Activated CD4-positive, alpha-beta T cell treated with anti-CD3 and anti-CD28 coated beads, Interleukin-2, amount 10 ng/mL, durations not matched to agents 7 days and 5 days (primary cell): ENCODE measurements at regions of chr5 and their contacts with region 1.

Region 1: GRCh38 chr5:143201589-143201988 is 201.9 kb downstream of the NR3C1 start:
- DNase-seq: no peak
- H3K4me3 Mint-ChIP-seq: no peak overlapping the region
- H3K27ac Mint-ChIP-seq: no peak overlapping the region
- H3K4me1 Mint-ChIP-seq: peaks cover 11% of the 10 kb centered on the region
- H3K27me3 Mint-ChIP-seq: no peaks in the 10 kb centered on the region

Region 2: GRCh38 chr5:143229896-143230675 is 28.5 kb after region 1 on chr5:
- CTCF ChIA-PET with region 1: no interaction called
- POLR2A ChIA-PET with region 1: no interaction called
- DNase-seq: peak; percentile 69
- H3K4me3 Mint-ChIP-seq: peak overlapping the region; percentile 44
- H3K27ac Mint-ChIP-seq: peak overlapping the region; percentile 91
- H3K4me1 Mint-ChIP-seq: peaks cover 30% of the 10 kb centered on the region
- H3K27me3 Mint-ChIP-seq: no peaks in the 10 kb centered on the region

Region 3: DNA sequence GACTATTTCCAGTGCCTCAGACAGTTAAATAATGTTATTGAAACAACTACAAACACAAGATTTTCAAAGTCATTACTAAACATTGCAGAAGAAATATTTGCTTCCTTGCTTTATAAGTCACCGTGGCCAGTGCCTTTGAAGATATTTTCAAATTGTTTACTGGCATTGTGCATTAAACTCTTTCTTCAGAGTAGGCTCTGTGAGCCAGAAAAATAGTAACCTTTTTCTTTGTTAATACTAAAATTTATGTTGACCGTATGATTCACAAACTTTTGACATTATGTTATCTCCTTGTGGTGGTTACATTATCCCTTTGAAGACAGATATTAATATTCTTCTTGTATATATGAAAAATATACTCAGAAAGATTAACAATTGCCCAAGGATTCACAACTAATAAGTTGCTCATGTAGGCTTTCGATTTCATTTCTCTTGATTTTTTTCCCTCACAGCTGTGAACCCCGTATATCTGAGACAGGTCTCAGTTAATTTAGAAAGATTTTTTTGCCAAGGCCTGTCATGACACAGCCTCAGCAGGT is 61.8 kb after region 1 on chr5:
- CTCF ChIA-PET with region 1: no interaction called
- POLR2A ChIA-PET with region 1: interaction called, 14 read pairs
- DNase-seq: no peak
- H3K4me3 Mint-ChIP-seq: no peak overlapping the region
- H3K27ac Mint-ChIP-seq: no peak overlapping the region
- H3K4me1 Mint-ChIP-seq: peaks cover 2% of the 10 kb centered on the region
- H3K27me3 Mint-ChIP-seq: no peaks in the 10 kb centered on the region

Region 4: GRCh38 chr5:143495821-143496275 is 294.3 kb after region 1 on chr5:
- CTCF ChIA-PET with region 1: no interaction called
- POLR2A ChIA-PET with region 1: no interaction called
- DNase-seq: no peak
- H3K4me3 Mint-ChIP-seq: no peak overlapping the region
- H3K27ac Mint-ChIP-seq: no peak overlapping the region
- H3K4me1 Mint-ChIP-seq: no peaks in the 10 kb centered on the region
- H3K27me3 Mint-ChIP-seq: no peaks in the 10 kb centered on the region